ENCODE measurements at regions of chr4 and their contacts with region 1.

Region 1: DNA sequence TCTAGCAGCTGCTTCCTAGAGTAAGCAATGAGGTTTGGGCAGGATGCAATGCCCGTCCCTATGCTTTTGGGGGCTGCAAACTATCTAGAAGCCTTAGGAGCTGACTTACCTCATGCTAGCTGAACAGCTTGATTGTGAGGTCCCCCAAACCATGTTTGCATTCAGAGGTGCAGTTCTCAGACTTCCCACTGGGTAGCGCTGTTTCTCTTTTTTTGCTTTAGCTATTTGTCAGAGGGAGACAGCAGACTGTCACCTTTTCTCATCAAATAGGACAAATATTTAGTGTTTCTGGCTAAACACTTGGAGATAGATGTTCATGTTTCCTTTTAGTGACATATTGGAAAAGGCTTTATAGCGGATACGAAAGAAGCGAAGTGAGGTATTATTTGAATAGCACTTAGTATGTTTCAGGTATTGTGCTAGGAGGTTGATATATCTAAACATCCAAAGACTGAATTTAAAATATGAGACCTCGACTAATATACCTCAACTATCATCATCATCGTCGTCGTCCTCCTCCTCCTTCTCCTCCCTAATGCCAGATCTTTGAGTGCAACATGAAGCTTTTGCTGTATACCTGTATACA is 18.7 kb upstream of the TMEM192 start:
- DNase-seq: peak; percentile 84
- H3K4me3 Mint-ChIP-seq: no peak overlapping the region
- H3K27ac Mint-ChIP-seq: no peak overlapping the region
- H3K4me1 Mint-ChIP-seq: no peaks in the 10 kb centered on the region
- H3K27me3 Mint-ChIP-seq: peaks cover 13% of the 10 kb centered on the region

Region 2: GRCh38 chr4:165118256-165118909 is 13.0 kb before region 1 on chr4:
- CTCF ChIA-PET with region 1: interaction called, 22 read pairs
- POLR2A ChIA-PET with region 1: no interaction called
- intact Hi-C with region 1: no loop called
- DNase-seq: no peak
- H3K4me3 Mint-ChIP-seq: no peak overlapping the region
- H3K27ac Mint-ChIP-seq: no peak overlapping the region
- H3K4me1 Mint-ChIP-seq: peaks cover 9% of the 10 kb centered on the region
- H3K27me3 Mint-ChIP-seq: peaks cover 5% of the 10 kb centered on the region

Region 3: DNA sequence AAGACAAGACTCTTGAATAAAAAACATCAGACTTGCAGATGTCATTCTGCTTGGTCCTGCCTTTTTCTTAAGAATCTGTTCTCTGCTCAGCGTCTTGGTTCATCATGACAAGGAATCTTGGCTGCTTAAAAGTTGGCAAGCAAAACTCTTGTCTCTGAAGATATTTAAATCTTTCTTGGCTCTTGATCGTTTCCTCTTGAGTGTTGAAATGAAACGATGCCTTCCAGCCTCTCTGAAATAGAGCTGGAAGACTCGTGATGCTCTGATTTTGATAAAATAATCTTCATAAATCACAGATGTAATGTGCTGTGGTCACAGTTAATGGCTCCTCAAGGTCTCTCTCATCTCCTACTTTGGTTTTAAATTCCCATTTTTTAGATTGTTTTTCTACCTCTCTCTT is 21.2 kb after region 1 on chr4:
- CTCF ChIA-PET with region 1: no interaction called
- POLR2A ChIA-PET with region 1: no interaction called
- intact Hi-C with region 1: no loop called
- DNase-seq: no peak
- H3K4me3 Mint-ChIP-seq: no peak overlapping the region
- H3K27ac Mint-ChIP-seq: no peak overlapping the region
- H3K4me1 Mint-ChIP-seq: no peaks in the 10 kb centered on the region
- H3K27me3 Mint-ChIP-seq: peaks cover 26% of the 10 kb centered on the region

Region 4: DNA sequence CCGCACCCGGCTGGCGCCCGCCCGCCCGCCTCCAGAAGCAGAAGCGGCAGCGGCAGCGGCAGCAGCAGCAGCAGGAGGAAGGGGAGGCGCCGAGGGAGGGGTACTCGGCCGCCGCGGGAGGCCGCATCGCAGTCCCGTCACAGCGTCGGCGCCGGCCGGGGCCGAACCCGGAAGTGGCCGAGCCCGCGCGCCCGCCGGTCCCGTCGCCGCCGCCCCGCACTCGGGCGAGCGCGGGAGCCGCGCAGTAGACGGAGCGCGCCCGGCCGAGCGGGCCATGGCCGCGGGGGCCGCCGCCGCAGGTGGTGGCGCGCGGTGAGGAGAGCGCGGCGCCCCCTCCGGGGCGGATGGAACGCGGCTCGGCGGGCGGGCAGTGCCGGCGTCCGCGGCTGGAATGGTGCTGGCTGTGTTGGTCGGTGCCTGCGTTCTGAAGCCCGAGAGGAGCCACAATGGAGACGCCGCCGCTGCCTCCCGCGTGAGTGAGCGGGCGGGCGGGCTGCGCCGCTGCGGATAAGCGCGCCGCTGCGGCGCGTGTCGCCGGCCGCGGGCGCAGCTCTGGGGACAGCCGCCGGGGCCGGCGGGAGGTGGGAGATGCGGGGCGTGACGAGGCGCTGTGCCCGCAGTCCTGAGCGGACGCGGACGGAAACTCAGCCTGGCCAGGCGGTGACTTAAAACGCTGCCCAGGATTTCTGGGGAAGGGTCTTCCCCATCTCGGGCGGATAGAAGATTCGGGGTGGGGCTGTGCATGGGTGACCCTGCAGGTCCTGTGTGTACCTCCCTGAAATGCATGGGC is 76.3 kb after region 1 on chr4 and contains the start of gene KLHL2:
- CTCF ChIA-PET with region 1: interaction called, 6 read pairs
- POLR2A ChIA-PET with region 1: no interaction called
- intact Hi-C with region 1: loop called (anchors 5 kb)
- DNase-seq: peak; percentile 74
- H3K4me3 Mint-ChIP-seq: peak within 1 kb of the TSS; percentile 88
- H3K27ac Mint-ChIP-seq: peak within 1 kb of the TSS; percentile 86
- H3K4me1 Mint-ChIP-seq: peaks cover 65% of the 10 kb centered on the region
- H3K27me3 Mint-ChIP-seq: no peaks in the 10 kb centered on the region
- total RNA-seq, gene KLHL2: 25.0 to 26.0 TPM

Region 5: GRCh38 chr4:165343353-165344191 is 212.2 kb after region 1 on chr4:
- CTCF ChIA-PET with region 1: interaction called, 55 read pairs
- POLR2A ChIA-PET with region 1: no interaction called
- intact Hi-C with region 1: loop called (anchors 1 kb)
- DNase-seq: peak; percentile 30
- H3K4me3 Mint-ChIP-seq: no peak overlapping the region
- H3K27ac Mint-ChIP-seq: no peak overlapping the region
- H3K4me1 Mint-ChIP-seq: no peaks in the 10 kb centered on the region
- H3K27me3 Mint-ChIP-seq: no peaks in the 10 kb centered on the region

Region 6: GRCh38 chr4:165355900-165356300 is 224.6 kb after region 1 on chr4:
- CTCF ChIA-PET with region 1: interaction called, 23 read pairs
- POLR2A ChIA-PET with region 1: no interaction called
- intact Hi-C with region 1: no loop called
- DNase-seq: peak; percentile 21
- H3K4me3 Mint-ChIP-seq: no peak overlapping the region
- H3K27ac Mint-ChIP-seq: no peak overlapping the region
- H3K4me1 Mint-ChIP-seq: no peaks in the 10 kb centered on the region
- H3K27me3 Mint-ChIP-seq: peaks cover 38% of the 10 kb centered on the region

Region 7: GRCh38 chr4:165464813-165465381 is 333.6 kb after region 1 on chr4:
- CTCF ChIA-PET with region 1: interaction called, 44 read pairs
- POLR2A ChIA-PET with region 1: no interaction called
- intact Hi-C with region 1: loop called (anchors 1 kb)
- DNase-seq: no peak
- H3K4me3 Mint-ChIP-seq: no peak overlapping the region
- H3K27ac Mint-ChIP-seq: no peak overlapping the region
- H3K4me1 Mint-ChIP-seq: no peaks in the 10 kb centered on the region
- H3K27me3 Mint-ChIP-seq: peaks cover 3% of the 10 kb centered on the region

Region 8: GRCh38 chr4:165470009-165470408 is 338.7 kb after region 1 on chr4:
- CTCF ChIA-PET with region 1: interaction called, 44 read pairs
- POLR2A ChIA-PET with region 1: no interaction called
- intact Hi-C with region 1: no loop called
- DNase-seq: no peak
- H3K4me3 Mint-ChIP-seq: no peak overlapping the region
- H3K27ac Mint-ChIP-seq: no peak overlapping the region
- H3K4me1 Mint-ChIP-seq: no peaks in the 10 kb centered on the region
- H3K27me3 Mint-ChIP-seq: peaks cover 6% of the 10 kb centered on the region

Region 9: DNA sequence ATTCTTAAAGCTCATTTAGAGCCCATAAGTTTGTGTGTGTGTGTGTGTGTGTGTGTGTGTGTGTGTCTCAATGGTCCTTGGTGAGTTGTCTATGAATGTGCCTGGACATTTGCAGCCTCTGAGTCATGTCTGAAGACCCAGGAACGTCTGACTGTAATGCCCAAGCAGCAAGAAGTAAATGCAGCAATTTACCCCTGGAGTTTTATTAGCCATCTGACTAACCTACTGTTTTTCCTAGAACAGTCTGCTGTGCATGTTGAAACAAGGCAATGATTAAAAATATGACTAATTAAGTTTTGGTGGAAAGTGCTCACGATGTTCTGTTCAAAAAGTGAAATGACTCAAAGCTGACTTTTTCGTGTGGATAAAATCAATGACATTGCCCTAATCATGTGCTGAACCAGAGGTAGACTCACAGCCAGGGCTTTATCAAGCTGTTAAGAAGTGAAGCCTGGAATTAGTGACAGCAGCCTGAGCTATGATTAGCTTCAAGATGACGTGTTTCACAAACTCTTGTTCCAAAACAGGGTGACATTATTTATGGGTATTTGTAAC is 449.1 kb after region 1 on chr4:
- CTCF ChIA-PET with region 1: no interaction called
- POLR2A ChIA-PET with region 1: no interaction called
- intact Hi-C with region 1: no loop called
- DNase-seq: no peak
- H3K4me3 Mint-ChIP-seq: no peak overlapping the region
- H3K27ac Mint-ChIP-seq: no peak overlapping the region
- H3K4me1 Mint-ChIP-seq: no peaks in the 10 kb centered on the region
- H3K27me3 Mint-ChIP-seq: no peaks in the 10 kb centered on the region

Measured in activated CD4-positive, alpha-beta memory T cell treated with anti-CD3 and anti-CD28 coated beads for 36 hours (primary cell).